ENCODE measurements at regions of chr10 and their contacts with region 1.

Region 1: GRCh38 chr10:97572214-97572989 is at the start of gene ANKRD2:
- DNase-seq: peak; percentile 31
- H3K4me3 Mint-ChIP-seq: no peak within 1 kb of the TSS
- H3K27ac Mint-ChIP-seq: no peak within 1 kb of the TSS
- H3K4me1 Mint-ChIP-seq: no peaks in the 10 kb centered on the region
- H3K27me3 Mint-ChIP-seq: peaks cover 9% of the 10 kb centered on the region
- total RNA-seq, gene ANKRD2: not detected in 2 replicates

Region 2: GRCh38 chr10:97612386-97612785 is 40.0 kb after region 1 on chr10:
- intact Hi-C with region 1: loop called (anchors 1 kb)
- DNase-seq: no peak
- H3K4me3 Mint-ChIP-seq: no peak overlapping the region
- H3K27ac Mint-ChIP-seq: no peak overlapping the region
- H3K4me1 Mint-ChIP-seq: no peaks in the 10 kb centered on the region
- H3K27me3 Mint-ChIP-seq: no peaks in the 10 kb centered on the region

Region 3: DNA sequence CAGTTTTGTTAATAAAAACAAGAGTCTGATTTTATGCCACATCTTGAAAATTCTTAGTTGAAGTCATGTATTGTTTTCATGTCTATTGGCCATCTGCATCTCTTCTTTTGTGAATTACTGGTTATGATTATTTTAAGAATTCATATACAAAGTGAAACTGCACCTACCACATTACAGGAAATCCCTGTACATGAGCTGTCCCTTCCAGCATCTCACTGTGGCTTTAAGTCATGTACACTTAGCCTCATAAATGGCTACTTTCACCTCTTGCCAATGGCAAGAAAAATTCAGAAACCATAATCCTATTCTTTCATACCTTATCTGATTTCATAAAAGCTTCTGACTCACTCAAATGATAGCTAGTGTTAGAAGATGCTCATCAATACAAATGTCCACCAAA is 409.4 kb after region 1 on chr10:
- intact Hi-C with region 1: no loop called
- DNase-seq: no peak
- H3K4me3 Mint-ChIP-seq: no peak overlapping the region
- H3K27ac Mint-ChIP-seq: no peak overlapping the region
- H3K4me1 Mint-ChIP-seq: no peaks in the 10 kb centered on the region
- H3K27me3 Mint-ChIP-seq: peaks cover 14% of the 10 kb centered on the region